Activated CD4-positive, alpha-beta T cell treated with anti-CD3 and anti-CD28 coated beads for 36 hours (primary cell): ENCODE measurements at regions of chr2 and their contacts with region 1.

Region 1: DNA sequence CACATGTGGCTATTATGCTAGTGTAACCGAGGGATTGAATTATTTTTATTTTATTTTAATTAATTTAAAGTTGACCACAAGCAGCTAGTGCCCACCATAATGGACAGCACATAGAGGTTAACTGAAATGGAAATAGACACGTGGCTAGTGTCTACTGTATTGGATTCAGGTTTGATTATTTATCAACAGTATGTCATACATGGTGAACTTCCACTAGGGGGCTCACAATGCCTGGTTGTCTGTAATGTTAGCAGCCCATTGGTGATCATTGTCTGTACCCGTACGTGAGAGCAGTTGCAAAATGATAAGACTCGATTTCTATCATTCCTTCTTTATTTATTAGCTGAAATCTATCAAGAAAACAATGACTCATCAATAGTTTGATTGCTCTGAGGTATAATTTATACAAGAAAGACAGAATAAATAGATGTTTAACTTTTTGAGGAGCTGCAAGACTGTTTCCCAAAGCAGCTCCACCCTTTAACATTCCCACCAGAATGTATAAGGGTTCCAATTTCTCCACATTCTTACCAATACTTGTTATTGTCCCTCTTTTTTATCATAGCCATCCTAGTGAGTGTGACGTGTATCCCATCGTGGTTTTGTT is 76.5 kb downstream of the CYBRD1 start:
- DNase-seq: peak; percentile 69
- ATAC-seq: peak; percentile 100
- H3K4me3 Mint-ChIP-seq: no peak overlapping the region
- H3K27ac Mint-ChIP-seq: no peak overlapping the region
- H3K4me1 Mint-ChIP-seq: no peaks in the 10 kb centered on the region
- H3K27me3 Mint-ChIP-seq: peaks cover 2% of the 10 kb centered on the region

Region 2: GRCh38 chr2:171574149-171574795 is 24.5 kb before region 1 on chr2:
- CTCF ChIA-PET with region 1: interaction called, 12 read pairs
- POLR2A ChIA-PET with region 1: no interaction called
- intact Hi-C with region 1: loop called in 1 of 2 experiments (anchors 2 kb)
- DNase-seq: peak; percentile 91
- ATAC-seq: peak; percentile 100
- H3K4me3 Mint-ChIP-seq: no peak overlapping the region
- H3K27ac Mint-ChIP-seq: no peak overlapping the region
- H3K4me1 Mint-ChIP-seq: peaks cover 6% of the 10 kb centered on the region
- H3K27me3 Mint-ChIP-seq: no peaks in the 10 kb centered on the region

Region 3: GRCh38 chr2:171579481-171579880 is 19.3 kb before region 1 on chr2:
- CTCF ChIA-PET with region 1: interaction called, 12 read pairs
- POLR2A ChIA-PET with region 1: no interaction called
- intact Hi-C with region 1: loop called in 1 of 2 experiments (anchors 2 kb)
- DNase-seq: no peak
- ATAC-seq: no peak
- H3K4me3 Mint-ChIP-seq: no peak overlapping the region
- H3K27ac Mint-ChIP-seq: no peak overlapping the region
- H3K4me1 Mint-ChIP-seq: peaks cover under 1% of the 10 kb centered on the region
- H3K27me3 Mint-ChIP-seq: peaks cover 3% of the 10 kb centered on the region

Region 4: DNA sequence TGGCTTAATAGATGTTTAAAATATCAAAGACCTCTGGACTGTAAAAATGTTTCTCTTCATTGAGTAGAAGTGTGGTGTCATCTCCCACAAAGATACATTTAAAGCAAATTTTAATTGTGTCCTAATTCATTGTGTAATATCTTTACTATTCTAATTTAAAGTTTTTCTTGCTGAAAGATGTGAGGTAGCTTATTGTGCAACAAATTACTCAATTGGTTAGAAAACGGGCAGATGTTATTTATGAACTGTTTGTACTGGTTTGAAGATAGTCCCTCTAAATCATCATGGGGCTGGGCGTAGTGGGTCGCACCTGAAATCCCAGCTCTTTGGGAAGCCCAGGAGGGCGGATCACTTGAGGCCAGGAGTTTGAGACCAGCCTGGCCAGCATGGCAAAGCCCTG is 11.2 kb before region 1 on chr2:
- CTCF ChIA-PET with region 1: interaction called, 33 read pairs
- POLR2A ChIA-PET with region 1: no interaction called
- intact Hi-C with region 1: no loop called
- DNase-seq: no peak
- ATAC-seq: no peak
- H3K4me3 Mint-ChIP-seq: no peak overlapping the region
- H3K27ac Mint-ChIP-seq: no peak overlapping the region
- H3K4me1 Mint-ChIP-seq: no peaks in the 10 kb centered on the region
- H3K27me3 Mint-ChIP-seq: peaks cover 7% of the 10 kb centered on the region

Region 5: DNA sequence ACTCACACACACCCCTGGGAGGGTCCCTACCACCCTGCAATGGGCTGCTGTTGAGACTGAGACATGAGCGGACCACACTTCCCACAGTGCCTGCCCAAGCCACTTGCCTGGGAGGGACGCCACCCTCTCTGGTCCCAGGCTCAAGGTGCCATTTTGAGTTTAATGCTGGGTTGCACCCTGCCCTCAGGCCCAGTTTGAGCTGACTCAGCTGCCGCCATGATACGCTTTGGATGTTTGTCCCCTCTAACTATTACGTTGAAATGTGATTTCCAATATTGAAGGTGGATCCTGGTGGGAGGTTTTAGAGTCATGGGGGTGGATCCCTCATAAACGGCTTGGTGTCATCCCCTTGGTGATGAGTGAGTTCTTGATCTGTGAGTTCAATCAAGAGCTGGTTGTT is 12.0 kb after region 1 on chr2:
- CTCF ChIA-PET with region 1: interaction called, 12 read pairs
- POLR2A ChIA-PET with region 1: no interaction called
- intact Hi-C with region 1: no loop called
- DNase-seq: no peak
- ATAC-seq: no peak
- H3K4me3 Mint-ChIP-seq: no peak overlapping the region
- H3K27ac Mint-ChIP-seq: no peak overlapping the region
- H3K4me1 Mint-ChIP-seq: no peaks in the 10 kb centered on the region
- H3K27me3 Mint-ChIP-seq: peaks cover 2% of the 10 kb centered on the region

Region 6: GRCh38 chr2:172131713-172132555 is 533.1 kb after region 1 on chr2:
- CTCF ChIA-PET with region 1: interaction called, 5 read pairs
- POLR2A ChIA-PET with region 1: no interaction called
- intact Hi-C with region 1: loop called (anchors 2 to 5 kb)
- DNase-seq: no peak
- ATAC-seq: no peak
- H3K4me3 Mint-ChIP-seq: no peak overlapping the region
- H3K27ac Mint-ChIP-seq: no peak overlapping the region
- H3K4me1 Mint-ChIP-seq: no peaks in the 10 kb centered on the region
- H3K27me3 Mint-ChIP-seq: peaks cover 2% of the 10 kb centered on the region